Heart right ventricle (tissue), 16 donors: ENCODE measurements at regions of chr4 and their contacts with region 1.

Region 1: GRCh38 chr4:163063891-163064290 is 102.8 kb downstream of the NAF1 start:
- DNase-seq: no peak
- ATAC-seq: no peak
- H3K4me3 ChIP-seq: no peak overlapping the region
- H3K27ac ChIP-seq: no peak overlapping the region
- H3K4me1 ChIP-seq: no peaks in the 10 kb centered on the region
- H3K27me3 ChIP-seq: no peaks in the 10 kb centered on the region
- CTCF ChIP-seq: no peak

Region 2: GRCh38 chr4:162865102-162865501 is 198.8 kb before region 1 on chr4:
- intact Hi-C with region 1: no loop called
- DNase-seq: no peak
- ATAC-seq: no peak
- H3K4me3 ChIP-seq: no peak overlapping the region
- H3K27ac ChIP-seq: no peak overlapping the region
- H3K4me1 ChIP-seq: no peaks in the 10 kb centered on the region
- H3K27me3 ChIP-seq: no peaks in the 10 kb centered on the region
- CTCF ChIP-seq: no peak

Region 3: GRCh38 chr4:163243297-163243981 is 179.5 kb after region 1 on chr4:
- intact Hi-C with region 1: loop called in 1 of 10 experiments (anchors 10 kb)
- DNase-seq: no peak
- ATAC-seq: no peak
- H3K4me3 ChIP-seq: no peak overlapping the region
- H3K27ac ChIP-seq: no peak overlapping the region
- H3K4me1 ChIP-seq: no peaks in the 10 kb centered on the region
- H3K27me3 ChIP-seq: peaks cover 0 to 11% (median 0%) of the 10 kb centered on the region in 7 donors
- CTCF ChIP-seq: no peak

Region 4: DNA sequence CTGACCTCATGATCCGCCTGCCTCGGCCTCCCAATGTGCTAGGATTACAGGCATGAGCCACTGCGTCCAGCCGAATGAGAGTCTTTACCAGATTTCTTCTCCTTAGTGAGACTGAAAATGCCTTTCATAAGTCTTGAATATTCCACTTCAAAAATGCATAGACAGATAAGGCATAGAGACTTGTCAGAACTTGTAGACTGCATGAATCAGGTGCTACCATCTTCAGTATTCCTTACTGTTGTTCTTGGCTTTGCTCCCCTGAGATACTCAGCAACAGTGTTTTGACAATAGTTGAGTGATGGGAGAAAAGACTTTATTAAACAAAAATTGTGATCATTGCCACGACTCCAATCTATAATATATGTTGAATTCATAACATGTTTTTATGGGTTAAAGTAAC is 398.7 kb after region 1 on chr4:
- intact Hi-C with region 1: no loop called
- DNase-seq: no peak
- ATAC-seq: no peak
- H3K4me3 ChIP-seq: no peak overlapping the region
- H3K27ac ChIP-seq: no peak overlapping the region
- H3K4me1 ChIP-seq: no peaks in the 10 kb centered on the region
- H3K27me3 ChIP-seq: peaks cover 0 to 8% (median 0%) of the 10 kb centered on the region in 7 donors
- CTCF ChIP-seq: no peak